PC-3 (cell line): ENCODE measurements at regions of chr4 and their contacts with region 1.

Region 1: GRCh38 chr4:41281038-41281634 is 24.4 kb downstream of the UCHL1 start:
- DNase-seq: peak; percentile 84
- ATAC-seq: peak; percentile 94
- H3K4me3 ChIP-seq: no peak overlapping the region
- H3K27ac ChIP-seq: no peak overlapping the region
- H3K4me1 ChIP-seq: peaks cover 4% of the 10 kb centered on the region; the same call in 1 of the 2 replicates
- H3K27me3 ChIP-seq: no peaks in the 10 kb centered on the region
- CTCF ChIP-seq: peak; percentile 90

Region 2: GRCh38 chr4:41174444-41174843 is 106.7 kb before region 1 on chr4:
- CTCF ChIA-PET with region 1: no interaction called
- POLR2A ChIA-PET with region 1: no interaction called
- intact Hi-C with region 1: no loop called
- DNase-seq: no peak
- ATAC-seq: no peak
- H3K4me3 ChIP-seq: no peak overlapping the region
- H3K27ac ChIP-seq: no peak overlapping the region
- H3K4me1 ChIP-seq: peaks cover 37% of the 10 kb centered on the region
- H3K27me3 ChIP-seq: no peaks in the 10 kb centered on the region
- CTCF ChIP-seq: no peak

Region 3: GRCh38 chr4:41661442-41662076 is 380.4 kb after region 1 on chr4:
- CTCF ChIA-PET with region 1: interaction called, 20 read pairs
- POLR2A ChIA-PET with region 1: no interaction called
- intact Hi-C with region 1: loop called (anchors 1 kb)
- DNase-seq: peak; percentile 67
- ATAC-seq: peak; percentile 53; the same call in 1 of the 2 replicates
- H3K4me3 ChIP-seq: no peak overlapping the region
- H3K27ac ChIP-seq: no peak overlapping the region
- H3K4me1 ChIP-seq: peaks cover 19% of the 10 kb centered on the region
- H3K27me3 ChIP-seq: no peaks in the 10 kb centered on the region
- CTCF ChIP-seq: peak; percentile 83

Region 4: GRCh38 chr4:41814565-41814964 is 533.4 kb after region 1 on chr4:
- CTCF ChIA-PET with region 1: no interaction called
- POLR2A ChIA-PET with region 1: no interaction called
- intact Hi-C with region 1: loop called (anchors 1 kb)
- DNase-seq: peak; percentile 52
- ATAC-seq: peak; percentile 67
- H3K4me3 ChIP-seq: no peak overlapping the region
- H3K27ac ChIP-seq: no peak overlapping the region
- H3K4me1 ChIP-seq: no peaks in the 10 kb centered on the region
- H3K27me3 ChIP-seq: peaks cover 25% of the 10 kb centered on the region
- CTCF ChIP-seq: peak; percentile 61

Region 5: DNA sequence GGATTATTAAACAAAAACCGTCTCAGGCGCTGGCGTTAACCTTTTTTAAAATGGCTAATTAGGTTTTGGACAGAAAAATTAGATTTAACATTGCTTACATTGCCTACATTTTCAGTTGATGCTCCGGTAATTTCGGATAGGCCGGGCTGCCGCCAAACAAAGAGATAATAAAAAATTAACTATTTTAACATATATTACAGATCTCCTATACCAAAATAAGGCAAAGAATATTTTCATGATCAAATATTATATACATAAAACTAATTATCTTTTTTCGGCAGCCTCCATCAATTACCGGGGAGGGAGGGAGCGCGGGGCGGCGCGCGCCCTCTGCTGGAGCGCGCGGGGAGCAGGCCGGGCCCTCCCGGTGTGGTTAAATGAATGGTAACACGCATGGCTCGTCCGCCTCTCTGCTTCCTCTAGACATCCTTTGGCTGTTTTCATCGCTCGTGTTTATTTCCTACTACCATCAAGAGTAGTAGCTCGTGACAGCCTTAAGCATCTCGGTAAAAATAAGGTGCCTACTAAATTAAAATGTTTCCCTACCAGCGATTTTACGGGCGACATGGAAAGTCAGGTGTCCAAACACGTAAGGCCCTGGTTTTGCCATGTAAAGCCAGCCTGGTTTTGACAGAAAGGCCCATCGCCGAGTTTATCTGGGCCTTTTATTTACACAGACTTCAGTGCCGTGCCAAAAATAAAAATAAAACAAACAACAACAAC is 601.6 kb after region 1 on chr4:
- CTCF ChIA-PET with region 1: no interaction called
- POLR2A ChIA-PET with region 1: no interaction called
- intact Hi-C with region 1: loop called (anchors 10 kb)
- DNase-seq: peak; percentile 39
- ATAC-seq: peak; percentile 74
- H3K4me3 ChIP-seq: no peak overlapping the region
- H3K27ac ChIP-seq: no peak overlapping the region
- H3K4me1 ChIP-seq: no peaks in the 10 kb centered on the region
- H3K27me3 ChIP-seq: peaks cover 24% of the 10 kb centered on the region; the same call in 1 of the 2 replicates
- CTCF ChIP-seq: peak; percentile 80